PC-9 (cell line): ENCODE measurements at regions of chr2 and their contacts with region 1.

Region 1: GRCh38 chr2:230644356-230644935 is 68.2 kb upstream of the CAB39 start:
- DNase-seq: no peak
- H3K4me3 ChIP-seq: no peak overlapping the region
- H3K27ac ChIP-seq: no peak overlapping the region
- H3K4me1 ChIP-seq: no peaks in the 10 kb centered on the region
- H3K27me3 ChIP-seq: no peaks in the 10 kb centered on the region
- CTCF ChIP-seq: no peak

Region 2: DNA sequence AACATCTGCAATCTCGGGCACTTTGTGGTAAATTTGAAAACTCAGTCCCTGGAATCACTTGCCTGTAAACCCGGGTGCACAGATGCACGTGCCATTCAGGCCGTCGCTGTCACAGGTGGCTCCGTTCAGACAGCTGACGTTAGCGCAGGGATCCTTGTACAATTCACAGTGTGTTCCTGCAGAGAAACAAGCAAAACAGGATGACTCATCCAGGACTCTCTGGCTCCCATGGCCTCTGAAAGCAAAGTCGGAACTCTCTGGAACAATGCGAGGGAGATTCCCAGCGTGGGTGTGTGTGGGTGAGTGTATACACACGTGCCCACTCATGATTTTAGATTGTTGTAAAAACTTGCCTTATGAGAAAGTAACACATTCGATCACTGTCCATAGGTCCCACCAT is 1237.3 kb before region 1 on chr2:
- CTCF ChIA-PET with region 1: interaction called, 12 read pairs
- POLR2A ChIA-PET with region 1: no interaction called
- intact Hi-C with region 1: no loop called
- DNase-seq: peak in 1 of 2 experiments; percentile 51
- H3K4me3 ChIP-seq: no peak overlapping the region
- H3K27ac ChIP-seq: peak overlapping the region; percentile 88
- H3K4me1 ChIP-seq: peaks cover 20% of the 10 kb centered on the region
- H3K27me3 ChIP-seq: no peaks in the 10 kb centered on the region
- CTCF ChIP-seq: no peak

Region 3: GRCh38 chr2:230564805-230565779 is 79.4 kb before region 1 on chr2:
- CTCF ChIA-PET with region 1: no interaction called
- POLR2A ChIA-PET with region 1: no interaction called
- intact Hi-C with region 1: no loop called
- DNase-seq: no peak
- H3K4me3 ChIP-seq: no peak overlapping the region
- H3K27ac ChIP-seq: no peak overlapping the region
- H3K4me1 ChIP-seq: no peaks in the 10 kb centered on the region
- H3K27me3 ChIP-seq: no peaks in the 10 kb centered on the region
- CTCF ChIP-seq: no peak

Region 4: GRCh38 chr2:230658877-230659652 is 14.6 kb after region 1 on chr2:
- CTCF ChIA-PET with region 1: interaction called, 11 read pairs
- POLR2A ChIA-PET with region 1: no interaction called
- intact Hi-C with region 1: no loop called
- DNase-seq: no peak
- H3K4me3 ChIP-seq: no peak overlapping the region
- H3K27ac ChIP-seq: no peak overlapping the region
- H3K4me1 ChIP-seq: peaks cover 5% of the 10 kb centered on the region; the same call in 1 of the 2 replicates
- H3K27me3 ChIP-seq: no peaks in the 10 kb centered on the region
- CTCF ChIP-seq: no peak

Region 5: DNA sequence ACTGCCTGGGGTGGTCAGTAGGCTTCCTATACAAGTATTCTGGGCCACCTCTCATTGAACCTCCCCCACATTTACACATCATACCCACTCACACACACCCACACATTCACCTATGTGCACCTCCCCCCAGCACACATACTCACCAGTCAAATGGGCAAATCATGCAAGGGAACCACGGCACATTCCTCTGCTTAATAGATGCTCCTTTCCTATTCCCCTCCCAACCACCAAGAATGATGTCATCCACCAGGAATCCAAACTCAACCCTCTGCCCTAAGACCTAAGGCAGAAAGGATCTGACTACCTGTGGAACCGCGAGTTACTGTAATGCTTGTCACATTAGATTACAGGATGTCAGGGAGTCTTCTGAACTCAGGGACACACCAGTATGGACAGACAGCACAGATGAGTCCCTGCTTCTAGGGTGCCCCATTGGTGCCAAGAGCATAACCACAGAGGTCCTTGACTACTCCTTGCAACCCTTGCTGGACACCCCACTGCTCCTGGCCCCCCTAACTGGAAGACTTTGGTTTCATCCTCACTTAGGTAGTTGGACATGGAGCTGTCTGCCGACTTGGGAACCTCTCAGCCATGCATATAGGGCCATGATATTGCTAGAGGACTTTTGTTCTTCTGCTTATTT is 46.7 kb after region 1 on chr2:
- CTCF ChIA-PET with region 1: no interaction called
- POLR2A ChIA-PET with region 1: no interaction called
- intact Hi-C with region 1: no loop called
- DNase-seq: peak; percentile 83 to 99
- H3K4me3 ChIP-seq: no peak overlapping the region
- H3K27ac ChIP-seq: peak overlapping the region; percentile 84
- H3K4me1 ChIP-seq: peaks cover 97% of the 10 kb centered on the region
- H3K27me3 ChIP-seq: no peaks in the 10 kb centered on the region
- CTCF ChIP-seq: no peak